ENCODE measurements at regions of chr2 and their contacts with region 1.

Region 1: DNA sequence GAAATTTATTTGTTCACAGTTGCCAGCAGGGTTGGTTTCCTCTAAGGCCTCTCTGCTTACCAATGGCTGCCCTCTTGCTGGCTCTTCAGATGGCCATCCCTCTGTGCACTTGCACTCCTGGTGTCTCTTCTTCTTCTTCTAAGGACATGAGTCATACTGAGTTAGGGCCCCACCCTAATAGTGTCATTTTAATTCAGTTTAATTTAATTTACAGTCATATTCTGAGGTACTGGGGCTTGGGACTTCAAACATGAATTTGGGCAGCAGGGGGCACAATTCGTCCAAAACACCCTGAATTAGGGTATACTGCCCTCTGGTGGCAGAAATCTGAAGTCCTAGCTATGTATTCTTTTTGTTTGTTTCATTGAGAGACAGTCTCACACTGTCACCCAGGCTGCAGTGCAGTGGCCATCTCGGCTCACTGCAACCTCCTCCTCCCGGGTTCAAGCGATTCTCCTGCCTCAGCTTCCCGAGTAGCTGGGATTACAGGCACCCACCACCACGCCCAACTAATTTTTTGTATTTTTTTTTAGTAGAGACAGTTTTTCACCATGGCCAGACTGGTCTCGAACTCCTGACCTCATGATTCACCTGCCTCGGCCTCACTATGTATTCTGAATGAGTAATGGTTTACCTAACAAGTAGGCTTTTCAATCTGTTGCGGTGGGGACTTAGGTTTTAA is 19.8 kb downstream of the SLC4A1AP start:
- DNase-seq: peak; percentile 60 to 95
- ATAC-seq: peak; percentile 81 to 92
- H3K4me3 ChIP-seq: no peak overlapping the region
- H3K27ac ChIP-seq: peak overlapping the region; percentile 52 to 78
- H3K4me1 ChIP-seq: peaks cover 31% of the 10 kb centered on the region
- CTCF ChIP-seq: peak; percentile 100
- EP300 ChIP-seq: no peak
- POLR2A ChIP-seq: no peak
- RAD21 ChIP-seq: peak; percentile 94 to 95

Region 2: GRCh38 chr2:27409321-27410073 is 274.0 kb before region 1 on chr2 and contains the start of gene PPM1G:
- CTCF ChIA-PET with region 1: interaction called, 29 read pairs
- POLR2A ChIA-PET with region 1: no interaction called
- DNase-seq: peak; percentile 87 to 97
- ATAC-seq: peak; percentile 97
- H3K4me3 ChIP-seq: peak within 1 kb of the TSS; percentile 87
- H3K27ac ChIP-seq: peak within 1 kb of the TSS; percentile 90 to 92
- H3K4me1 ChIP-seq: peaks cover 30% of the 10 kb centered on the region; the same call in 2 of the 3 replicates
- CTCF ChIP-seq: no peak
- EP300 ChIP-seq: no peak
- POLR2A ChIP-seq: peak; percentile 94
- RAD21 ChIP-seq: no peak
- polyA plus RNA-seq, gene PPM1G: 123 and 129 TPM in 2 replicates

Region 3: GRCh38 chr2:27655155-27655951 is 28.2 kb before region 1 on chr2:
- CTCF ChIA-PET with region 1: interaction called, 118 read pairs
- POLR2A ChIA-PET with region 1: no interaction called
- DNase-seq: peak in 1 of 2 experiments; percentile 29
- ATAC-seq: peak; percentile 24 to 51; a peak in 4 of 6 replicates
- H3K4me3 ChIP-seq: no peak overlapping the region
- H3K27ac ChIP-seq: no peak overlapping the region
- H3K4me1 ChIP-seq: peaks cover 9% of the 10 kb centered on the region; the same call in 2 of the 3 replicates
- CTCF ChIP-seq: no peak
- EP300 ChIP-seq: no peak
- POLR2A ChIP-seq: no peak
- RAD21 ChIP-seq: no peak

Region 4: GRCh38 chr2:27697660-27698059 is 14.1 kb after region 1 on chr2:
- CTCF ChIA-PET with region 1: interaction called, 53 read pairs
- POLR2A ChIA-PET with region 1: no interaction called
- DNase-seq: no peak
- ATAC-seq: no peak
- H3K4me3 ChIP-seq: no peak overlapping the region
- H3K27ac ChIP-seq: no peak overlapping the region
- H3K4me1 ChIP-seq: peaks cover 9% of the 10 kb centered on the region
- CTCF ChIP-seq: no peak
- EP300 ChIP-seq: no peak
- POLR2A ChIP-seq: no peak
- RAD21 ChIP-seq: no peak

Region 5: DNA sequence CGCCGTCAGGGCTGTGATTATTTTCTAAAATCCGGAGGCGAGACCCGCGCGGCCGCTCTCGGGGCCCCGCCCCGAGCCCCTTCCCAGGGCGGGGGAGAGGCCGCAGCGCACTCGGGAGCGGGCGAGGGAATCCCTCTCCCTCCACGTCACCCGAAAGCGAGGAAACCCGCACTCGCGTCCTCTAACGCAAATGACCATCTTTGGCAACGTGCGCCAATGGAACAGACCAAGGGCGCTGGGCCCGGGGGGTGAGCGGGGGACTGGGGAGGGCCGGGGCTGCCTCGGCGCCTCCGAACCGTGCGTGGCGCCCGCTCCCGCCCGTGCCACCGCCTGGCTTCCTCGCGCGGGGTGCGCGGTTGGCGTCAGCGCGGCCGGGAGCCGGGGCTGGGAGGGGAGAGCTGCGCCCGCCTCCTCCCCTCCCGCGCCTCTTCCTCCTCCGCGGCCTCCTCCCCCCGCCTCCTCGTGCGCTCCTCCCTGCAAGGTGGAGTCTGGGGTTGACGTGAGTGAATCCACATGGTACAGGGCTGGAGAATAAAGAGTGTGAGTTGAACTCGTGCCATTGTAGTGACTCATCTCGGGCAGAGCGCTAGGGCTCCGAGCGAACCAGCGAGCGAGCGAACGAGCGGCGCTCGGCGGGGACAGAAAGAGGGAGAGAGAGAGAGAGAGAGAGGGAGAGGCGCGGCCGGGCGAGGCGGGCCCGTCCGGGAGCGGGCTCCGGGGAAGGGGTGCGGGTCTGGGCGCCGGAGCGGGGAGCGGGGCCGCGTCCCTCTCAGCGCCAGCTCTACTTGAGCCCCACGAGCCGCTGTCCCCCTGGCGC is 709.0 kb after region 1 on chr2 and contains the start of gene FOSL2:
- CTCF ChIA-PET with region 1: interaction called, 10 read pairs
- POLR2A ChIA-PET with region 1: interaction called, 5 read pairs
- DNase-seq: peak; percentile 98 to 100
- ATAC-seq: peak; percentile 49 to 76
- H3K4me3 ChIP-seq: peak within 1 kb of the TSS; percentile 78
- H3K27ac ChIP-seq: peak within 1 kb of the TSS; percentile 95
- H3K4me1 ChIP-seq: peaks cover 21% of the 10 kb centered on the region
- CTCF ChIP-seq: no peak; the same call in 2 of the 3 replicates
- EP300 ChIP-seq: peak; percentile 38 to 68; a peak in 2 of 5 replicates
- POLR2A ChIP-seq: peak; percentile 74
- RAD21 ChIP-seq: peak; percentile 46; a peak in 4 of 5 replicates
- polyA plus RNA-seq, gene FOSL2: 45.7 and 50.6 TPM in 2 replicates

Region 6: GRCh38 chr2:28430788-28431418 is 747.4 kb after region 1 on chr2:
- CTCF ChIA-PET with region 1: interaction called, 16 read pairs
- POLR2A ChIA-PET with region 1: no interaction called
- DNase-seq: no peak
- ATAC-seq: peak; percentile 14 to 26; a peak in 4 of 6 replicates
- H3K4me3 ChIP-seq: no peak overlapping the region
- H3K27ac ChIP-seq: peak overlapping the region in 1 of 2 experiments; percentile 46; a peak in 2 of 6 replicates
- H3K4me1 ChIP-seq: peaks cover 27% of the 10 kb centered on the region
- CTCF ChIP-seq: no peak
- EP300 ChIP-seq: no peak
- POLR2A ChIP-seq: no peak
- RAD21 ChIP-seq: no peak

Region 7: DNA sequence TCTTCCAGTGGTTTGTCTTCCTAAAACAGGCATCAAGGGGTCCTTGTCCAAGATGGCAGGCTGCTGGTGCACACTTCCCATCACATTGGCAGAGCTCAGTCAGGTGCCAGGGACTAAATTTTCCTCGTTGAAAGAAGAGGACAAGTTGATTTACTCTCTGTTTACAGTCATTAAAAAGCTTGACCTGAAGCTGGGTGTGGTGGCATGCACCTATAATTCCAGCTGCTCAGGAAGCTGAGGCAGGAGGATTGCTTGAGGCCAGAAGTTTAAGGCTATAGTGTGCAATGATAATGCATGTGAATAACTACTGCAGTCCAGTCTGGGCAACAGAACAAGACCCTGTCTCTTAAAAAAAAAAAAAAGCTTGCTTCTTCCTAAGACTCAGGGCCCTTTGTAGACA is 808.8 kb after region 1 on chr2:
- CTCF ChIA-PET with region 1: interaction called, 12 read pairs
- POLR2A ChIA-PET with region 1: no interaction called
- DNase-seq: no peak
- ATAC-seq: no peak
- H3K4me3 ChIP-seq: no peak overlapping the region
- H3K27ac ChIP-seq: no peak overlapping the region
- H3K4me1 ChIP-seq: no peaks in the 10 kb centered on the region
- CTCF ChIP-seq: no peak
- EP300 ChIP-seq: no peak
- POLR2A ChIP-seq: no peak
- RAD21 ChIP-seq: no peak